Activated B cell treated with CpG ODN at 0.5 μM for 24 hours (primary cell): ENCODE measurements at regions of chr15 and their contacts with region 1.

Region 1: GRCh38 chr15:52749258-52749657 is 40.9 kb downstream of the ONECUT1 start:
- DNase-seq: no peak
- ATAC-seq: peak; percentile 89
- H3K4me3 Mint-ChIP-seq: no peak overlapping the region
- H3K27ac Mint-ChIP-seq: no peak overlapping the region
- H3K4me1 Mint-ChIP-seq: peaks cover 11% of the 10 kb centered on the region
- H3K27me3 Mint-ChIP-seq: peaks cover 4% of the 10 kb centered on the region
- CTCF ChIP-seq: no peak

Region 2: DNA sequence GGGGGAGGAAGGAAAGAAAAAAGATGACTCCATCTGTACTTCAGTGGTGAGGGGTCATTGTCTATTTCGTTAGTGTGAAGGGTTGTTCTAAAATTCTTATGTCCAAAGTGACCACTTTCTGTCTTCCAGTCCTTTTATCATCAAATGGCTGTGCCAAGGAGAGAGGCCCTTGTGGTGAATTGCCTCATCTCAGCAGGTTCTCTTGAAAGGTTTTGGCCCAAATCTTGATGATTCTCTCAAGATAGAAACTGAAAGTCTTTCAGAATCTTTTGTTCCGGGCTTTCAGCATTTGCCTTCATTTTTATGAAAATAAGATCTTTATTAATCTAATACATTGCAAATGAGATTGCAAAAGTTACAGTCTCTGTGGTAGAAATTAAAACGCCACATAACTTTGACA is 1871.7 kb after region 1 on chr15:
- CTCF ChIA-PET with region 1: no interaction called
- POLR2A ChIA-PET with region 1: interaction called, 10 read pairs
- intact Hi-C with region 1: no loop called
- DNase-seq: no peak
- ATAC-seq: no peak
- H3K4me3 Mint-ChIP-seq: no peak overlapping the region
- H3K27ac Mint-ChIP-seq: no peak overlapping the region
- H3K4me1 Mint-ChIP-seq: no peaks in the 10 kb centered on the region
- H3K27me3 Mint-ChIP-seq: no peaks in the 10 kb centered on the region
- CTCF ChIP-seq: no peak